Activated T-helper 1 cell treated with anti-CD3 and anti-CD28 coated beads, Interleukin-12 subunit alpha, Interleukin-12 subunit beta, Interleukin-2, Interleukin-4 antibody, amounts not matched to agents 30 ng/mL and 10 ng/mL and 1 ng/mL, durations not matched to agents 14 hours and 24 hours and 36 hours (primary cell): ENCODE measurements at regions of chrX and their contacts with region 1.

Region 1: DNA sequence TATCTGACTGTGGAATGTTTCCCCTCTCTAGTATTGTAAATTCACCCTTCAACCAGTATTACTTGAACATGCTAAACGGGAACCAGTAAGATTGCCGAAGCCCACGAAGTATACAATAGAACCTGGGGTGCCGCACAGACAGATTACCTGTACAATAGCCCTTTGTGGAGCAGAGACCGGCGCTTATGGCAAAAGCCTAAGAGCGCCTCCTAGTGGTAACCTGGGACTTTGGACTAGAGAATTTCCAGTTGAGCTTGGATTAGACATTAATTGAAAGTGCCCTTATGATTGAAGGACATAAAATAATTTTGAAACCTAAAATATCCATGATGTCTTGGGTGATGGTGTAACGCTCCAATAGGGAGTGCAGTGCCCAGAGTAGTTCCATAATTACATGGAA is 14.1 kb downstream of the ZNF157 start:
- DNase-seq: peak; percentile 48
- H3K4me3 Mint-ChIP-seq: no peak overlapping the region
- H3K27ac Mint-ChIP-seq: no peak overlapping the region
- H3K4me1 Mint-ChIP-seq: peaks cover 12% of the 10 kb centered on the region
- H3K27me3 Mint-ChIP-seq: no peaks in the 10 kb centered on the region

Region 2: GRCh38 chrX:46366381-46367207 is 1017.9 kb before region 1 on chrX:
- intact Hi-C with region 1: no loop called
- DNase-seq: no peak
- H3K4me3 Mint-ChIP-seq: no peak overlapping the region
- H3K27ac Mint-ChIP-seq: no peak overlapping the region
- H3K4me1 Mint-ChIP-seq: no peaks in the 10 kb centered on the region
- H3K27me3 Mint-ChIP-seq: no peaks in the 10 kb centered on the region

Region 3: DNA sequence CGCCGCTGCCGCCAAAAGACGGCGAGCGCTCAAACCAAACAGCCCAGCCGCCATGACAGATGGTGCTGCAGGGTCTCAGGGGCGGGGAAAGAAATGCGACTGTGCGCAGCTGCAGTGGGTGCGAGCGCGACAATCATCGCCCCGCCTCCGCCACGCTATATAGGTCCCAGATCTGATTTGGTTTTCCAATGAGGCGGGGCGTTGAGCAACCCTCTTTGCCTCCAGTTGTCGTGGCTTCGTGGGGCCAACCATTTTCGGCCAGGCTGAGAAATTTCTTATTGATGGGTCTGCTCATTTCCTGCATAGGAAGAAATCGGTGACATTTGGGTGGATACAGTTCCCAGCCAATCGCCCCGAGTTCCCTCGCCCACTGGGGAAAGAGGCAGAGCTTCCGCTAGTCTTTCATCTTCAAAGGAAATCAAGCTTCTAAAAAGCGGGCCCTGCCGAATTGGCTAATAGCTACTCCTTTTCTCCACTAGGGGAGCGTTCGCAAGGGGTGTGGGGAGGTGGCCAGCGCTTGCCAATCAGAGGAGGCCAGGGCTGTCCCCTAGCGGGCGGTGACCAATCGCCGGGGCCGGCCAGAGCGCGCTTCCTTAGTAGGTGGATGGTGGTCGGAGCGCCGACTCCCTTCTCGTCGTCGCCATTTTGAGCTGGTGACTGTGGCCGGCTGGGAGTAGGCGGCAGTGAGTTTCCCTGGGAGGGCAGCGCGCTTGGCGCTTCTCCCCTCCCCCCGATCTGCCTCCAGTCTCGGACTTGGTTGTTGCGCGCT is 239.7 kb before region 1 on chrX and contains the starts of genes NDUFB11 and RBM10:
- intact Hi-C with region 1: no loop called
- DNase-seq: peak; percentile 89
- H3K4me3 Mint-ChIP-seq: peak within 1 kb of the TSS; percentile 100
- H3K27ac Mint-ChIP-seq: peak within 1 kb of the TSS; percentile 100
- H3K4me1 Mint-ChIP-seq: peaks cover 18% of the 10 kb centered on the region
- H3K27me3 Mint-ChIP-seq: peaks cover 2% of the 10 kb centered on the region
- total RNA-seq, gene NDUFB11: 84.5 and 88.7 TPM in 2 replicates
- total RNA-seq, gene RBM10: 62.0 and 64.1 TPM in 2 replicates

Region 4: DNA sequence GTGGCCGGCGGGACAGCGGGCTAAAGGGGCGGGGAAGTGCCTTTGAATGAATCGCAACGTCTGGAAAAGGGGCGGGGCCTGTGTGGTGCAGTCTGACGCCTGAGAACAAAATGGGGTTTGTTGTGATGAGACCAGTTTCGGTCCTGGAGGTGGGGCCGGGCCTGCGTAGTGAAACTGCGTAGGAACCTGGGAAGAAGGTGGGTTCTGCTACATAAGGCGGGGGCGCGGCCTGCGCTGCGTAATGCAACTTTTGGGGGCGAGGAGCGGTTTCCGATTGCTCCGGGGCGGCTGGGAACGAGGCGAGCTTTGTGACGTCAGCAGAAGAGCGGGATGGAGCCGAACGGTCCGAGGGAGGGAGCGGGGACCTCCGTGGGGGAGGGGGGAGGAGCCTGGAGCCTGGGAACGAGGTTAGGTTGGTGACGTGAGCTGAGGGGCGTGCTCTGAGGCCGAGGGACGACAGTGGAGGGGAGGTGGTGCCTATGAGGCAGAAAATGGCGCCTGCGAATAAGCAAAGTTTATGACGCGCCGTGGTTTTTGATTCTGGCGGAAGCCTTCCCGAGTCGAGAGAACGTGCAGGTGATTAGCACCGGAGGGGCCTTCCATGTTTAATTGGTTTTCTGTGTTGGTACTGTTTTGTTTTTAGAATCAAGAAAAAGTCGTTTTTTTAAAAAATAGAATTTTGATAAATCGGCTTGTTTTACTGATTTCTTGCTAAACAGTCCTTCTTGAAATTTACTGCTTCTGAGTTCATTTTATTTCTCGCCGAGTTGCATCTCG is 151.0 kb before region 1 on chrX:
- intact Hi-C with region 1: loop called (anchors 1 kb)
- DNase-seq: peak; percentile 87
- H3K4me3 Mint-ChIP-seq: peak overlapping the region; percentile 87
- H3K27ac Mint-ChIP-seq: peak overlapping the region; percentile 90
- H3K4me1 Mint-ChIP-seq: peaks cover 19% of the 10 kb centered on the region
- H3K27me3 Mint-ChIP-seq: no peaks in the 10 kb centered on the region

Region 5: GRCh38 chrX:47311932-47312774 is 72.3 kb before region 1 on chrX:
- intact Hi-C with region 1: loop called (anchors 1 kb)
- DNase-seq: peak; percentile 1
- H3K4me3 Mint-ChIP-seq: no peak overlapping the region
- H3K27ac Mint-ChIP-seq: no peak overlapping the region
- H3K4me1 Mint-ChIP-seq: no peaks in the 10 kb centered on the region
- H3K27me3 Mint-ChIP-seq: no peaks in the 10 kb centered on the region

Region 6: GRCh38 chrX:47366028-47366722 is 18.3 kb before region 1 on chrX:
- intact Hi-C with region 1: loop called (anchors 2 kb)
- DNase-seq: peak; percentile 51
- H3K4me3 Mint-ChIP-seq: peak overlapping the region; percentile 89
- H3K27ac Mint-ChIP-seq: peak overlapping the region; percentile 86
- H3K4me1 Mint-ChIP-seq: peaks cover 11% of the 10 kb centered on the region
- H3K27me3 Mint-ChIP-seq: peaks cover 2% of the 10 kb centered on the region

Region 7: DNA sequence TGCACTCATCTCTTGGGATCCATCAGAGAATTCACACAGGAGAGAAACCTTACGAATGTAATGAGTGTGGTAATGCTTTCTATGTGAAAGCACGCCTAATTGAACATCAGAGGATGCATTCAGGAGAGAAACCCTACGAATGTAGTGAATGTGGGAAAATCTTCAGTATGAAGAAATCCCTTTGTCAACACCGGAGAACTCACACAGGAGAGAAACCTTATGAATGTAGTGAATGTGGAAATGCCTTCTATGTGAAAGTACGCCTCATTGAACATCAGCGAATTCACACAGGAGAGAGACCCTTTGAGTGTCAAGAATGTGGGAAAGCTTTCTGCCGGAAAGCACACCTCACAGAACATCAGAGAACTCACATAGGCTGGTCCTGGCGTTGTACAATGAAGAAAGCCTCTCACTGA is 28.7 kb after region 1 on chrX:
- intact Hi-C with region 1: no loop called
- DNase-seq: no peak
- H3K4me3 Mint-ChIP-seq: no peak overlapping the region
- H3K27ac Mint-ChIP-seq: no peak overlapping the region
- H3K4me1 Mint-ChIP-seq: no peaks in the 10 kb centered on the region
- H3K27me3 Mint-ChIP-seq: no peaks in the 10 kb centered on the region

Region 8: DNA sequence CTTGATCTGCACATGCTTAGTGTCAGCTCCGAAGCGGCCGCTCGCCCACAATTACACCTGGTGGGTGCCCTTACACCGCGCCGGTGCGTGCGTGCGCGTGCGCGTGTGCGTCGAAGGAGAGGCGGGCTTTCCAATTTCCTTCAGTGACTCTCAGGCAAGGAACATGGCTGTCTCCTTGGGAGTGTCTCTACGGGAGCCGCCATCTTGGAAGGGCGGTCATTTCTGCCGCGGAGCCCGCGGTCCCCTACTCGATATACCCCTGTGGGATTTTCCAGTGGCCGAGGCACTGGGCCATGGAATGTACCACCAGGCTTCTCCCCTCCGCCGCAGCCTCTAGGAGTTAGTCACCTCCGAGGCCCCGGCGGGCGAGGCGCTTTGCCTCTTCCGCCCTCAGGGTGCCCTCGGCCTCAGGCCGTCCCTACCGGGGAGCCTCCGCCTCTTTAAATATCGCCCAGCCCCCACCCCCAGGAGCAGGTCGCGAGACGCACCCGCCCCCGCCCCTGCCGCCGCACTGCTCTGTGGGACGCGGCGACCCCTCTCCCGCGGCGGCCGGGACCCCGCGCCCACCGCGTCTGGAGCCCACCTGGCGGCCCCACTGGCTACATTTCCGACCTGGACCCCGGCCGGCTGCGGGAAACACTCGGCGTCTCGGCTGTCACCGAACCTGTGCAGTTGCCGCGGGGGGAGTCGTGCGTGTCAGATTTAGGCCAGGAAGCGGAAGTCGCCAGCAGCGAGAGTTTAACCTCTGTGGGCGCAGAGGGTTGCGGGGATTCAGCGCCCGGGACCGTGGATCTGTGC is 98.2 kb after region 1 on chrX and contains the start of gene ZNF41:
- intact Hi-C with region 1: loop called (anchors 5 kb)
- DNase-seq: peak; percentile 63
- H3K4me3 Mint-ChIP-seq: peak within 1 kb of the TSS; percentile 92
- H3K27ac Mint-ChIP-seq: peak within 1 kb of the TSS; percentile 91
- H3K4me1 Mint-ChIP-seq: peaks cover 26% of the 10 kb centered on the region
- H3K27me3 Mint-ChIP-seq: no peaks in the 10 kb centered on the region
- total RNA-seq, gene ZNF41: 10.7 and 10.9 TPM in 2 replicates

Region 9: DNA sequence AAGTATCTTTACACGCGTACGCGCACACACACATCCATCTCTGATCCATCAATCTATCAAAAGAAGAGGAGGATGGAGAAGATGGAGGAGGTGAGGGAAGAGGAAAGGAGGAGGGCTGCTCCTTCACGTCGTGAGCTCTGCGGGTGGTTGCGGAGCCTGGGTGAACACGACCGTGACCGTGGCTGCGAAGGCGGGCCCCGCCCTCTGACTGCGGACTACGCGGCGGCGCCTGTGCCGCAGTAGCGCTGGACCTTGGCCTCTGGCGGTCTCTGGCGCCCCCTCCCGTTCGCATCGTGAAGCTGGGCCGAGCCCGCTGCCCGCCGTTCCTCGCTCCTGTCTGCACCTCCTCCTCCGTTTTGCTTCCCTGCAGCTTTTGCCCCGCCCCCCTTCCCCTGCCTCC is 138.8 kb after region 1 on chrX:
- intact Hi-C with region 1: loop called (anchors 1 kb)
- DNase-seq: peak; percentile 69
- H3K4me3 Mint-ChIP-seq: peak overlapping the region; percentile 70
- H3K27ac Mint-ChIP-seq: no peak overlapping the region
- H3K4me1 Mint-ChIP-seq: no peaks in the 10 kb centered on the region
- H3K27me3 Mint-ChIP-seq: no peaks in the 10 kb centered on the region

Region 10: DNA sequence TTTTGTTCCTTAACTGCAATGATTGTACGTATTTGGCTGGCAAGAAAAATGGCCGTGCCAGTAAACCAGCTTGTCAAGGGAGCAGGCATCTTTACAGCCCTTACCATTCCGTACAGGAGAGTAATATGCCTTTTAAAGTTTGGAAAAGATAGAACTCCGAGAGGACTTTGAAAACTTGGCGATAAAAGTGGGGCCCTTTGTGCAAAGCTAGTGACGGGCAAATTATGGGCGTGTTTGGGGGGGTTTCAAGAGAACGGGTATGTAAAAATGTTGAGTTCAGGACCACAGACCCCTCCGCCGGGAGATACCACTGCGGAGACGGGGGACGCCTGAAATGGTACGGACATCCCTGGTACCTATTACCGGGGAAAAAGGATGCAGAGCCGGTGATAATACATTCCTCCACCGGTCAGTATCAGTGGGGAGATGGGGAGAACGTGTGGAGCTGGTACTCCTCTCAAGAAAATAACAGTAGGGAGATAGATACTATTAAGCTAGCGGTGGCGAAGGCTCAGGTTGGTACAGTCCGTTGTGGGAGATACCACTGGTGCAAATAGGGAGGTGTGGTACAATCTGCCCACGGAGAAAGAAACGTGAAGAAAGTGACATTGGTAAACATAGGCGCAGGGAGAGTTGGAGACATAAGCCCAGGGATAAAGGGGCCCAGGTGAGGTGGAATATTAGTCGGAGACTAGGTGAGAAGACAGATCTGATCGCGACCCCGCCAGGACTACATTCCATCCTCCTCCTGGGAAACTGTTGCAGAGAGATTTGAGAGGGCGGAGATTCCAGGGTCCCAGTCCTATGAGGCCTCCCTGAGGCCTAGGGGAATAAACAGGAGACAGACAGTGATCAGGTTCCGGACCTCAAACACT is 636.8 kb after region 1 on chrX:
- intact Hi-C with region 1: loop called (anchors 10 kb)
- DNase-seq: peak; percentile 54
- H3K4me3 Mint-ChIP-seq: peak overlapping the region; percentile 92
- H3K27ac Mint-ChIP-seq: peak overlapping the region; percentile 97
- H3K4me1 Mint-ChIP-seq: peaks cover 6% of the 10 kb centered on the region
- H3K27me3 Mint-ChIP-seq: peaks cover 7% of the 10 kb centered on the region